ENCODE measurements at regions of chr17 and their contacts with region 1.

Region 1: GRCh38 chr17:78421484-78422266 is 43.2 kb downstream of the PGS1 start:
- DNase-seq: peak; percentile 75 to 85
- ATAC-seq: peak; percentile 79 to 90 (median 86)
- H3K4me3 ChIP-seq: no peak overlapping the region
- H3K27ac ChIP-seq: peak overlapping the region; percentile 7
- H3K4me1 ChIP-seq: peaks cover 16% of the 10 kb centered on the region
- H3K27me3 ChIP-seq: no peaks in the 10 kb centered on the region
- CTCF ChIP-seq: peak; percentile 100

Region 2: DNA sequence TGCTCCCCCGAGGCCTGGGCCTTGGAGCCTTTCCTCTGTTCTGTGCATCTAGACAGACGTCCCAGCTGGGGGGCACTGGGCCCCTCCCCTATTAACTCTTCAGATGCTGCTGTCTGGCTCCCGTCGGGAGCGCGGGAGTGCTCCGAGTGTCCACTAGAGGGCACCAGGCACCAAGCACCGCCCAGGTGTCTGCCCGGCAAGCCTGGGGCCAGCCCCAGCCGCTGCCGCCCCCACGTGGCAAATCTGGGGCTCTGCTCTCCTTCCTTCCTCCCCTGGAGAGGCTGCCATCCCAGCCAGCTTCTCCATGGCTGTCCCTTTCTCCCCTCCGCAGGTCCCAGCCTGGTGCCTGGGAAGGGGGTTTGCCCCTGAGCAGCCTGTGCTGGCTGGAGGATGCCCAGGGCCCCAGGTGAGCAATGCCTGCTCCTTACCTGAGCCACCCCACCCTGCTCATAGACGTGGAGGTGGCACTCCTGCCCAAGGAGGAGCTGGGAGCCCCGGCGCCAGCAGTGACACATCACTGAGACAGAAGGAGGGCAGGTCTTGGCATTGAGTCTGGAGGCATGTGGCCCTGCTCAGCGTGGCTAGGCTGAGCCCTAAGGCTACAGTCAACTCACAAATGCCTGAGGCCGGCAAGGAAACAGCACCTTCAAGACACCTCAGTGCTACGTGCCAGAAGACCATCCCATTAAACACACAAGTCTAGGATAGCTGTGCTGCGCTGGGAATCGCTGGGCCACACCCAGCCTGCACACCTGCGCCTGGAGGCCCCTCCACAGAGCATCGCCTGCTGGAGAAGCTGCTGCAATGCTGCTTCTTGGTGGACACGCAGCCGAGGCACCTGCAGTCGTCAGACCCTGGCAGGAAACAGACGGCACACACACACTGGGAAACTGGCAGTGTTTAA is 170.5 kb before region 1 on chr17:
- intact Hi-C with region 1: loop called in 1 of 2 experiments (anchors 1 kb)
- DNase-seq: peak; percentile 87 to 93
- ATAC-seq: peak; percentile 83 to 88 (median 86)
- H3K4me3 ChIP-seq: peak overlapping the region; percentile 4
- H3K27ac ChIP-seq: no peak overlapping the region
- H3K4me1 ChIP-seq: peaks cover 13% of the 10 kb centered on the region
- H3K27me3 ChIP-seq: no peaks in the 10 kb centered on the region
- CTCF ChIP-seq: peak; percentile 100

Region 3: GRCh38 chr17:78289802-78290363 is 131.8 kb before region 1 on chr17:
- intact Hi-C with region 1: loop called (anchors 2 to 5 kb)
- DNase-seq: peak; percentile 73 to 85
- ATAC-seq: peak; percentile 88 to 95 (median 90)
- H3K4me3 ChIP-seq: no peak overlapping the region
- H3K27ac ChIP-seq: no peak overlapping the region
- H3K4me1 ChIP-seq: peaks cover 9% of the 10 kb centered on the region
- H3K27me3 ChIP-seq: no peaks in the 10 kb centered on the region
- CTCF ChIP-seq: peak; percentile 64

Region 4: DNA sequence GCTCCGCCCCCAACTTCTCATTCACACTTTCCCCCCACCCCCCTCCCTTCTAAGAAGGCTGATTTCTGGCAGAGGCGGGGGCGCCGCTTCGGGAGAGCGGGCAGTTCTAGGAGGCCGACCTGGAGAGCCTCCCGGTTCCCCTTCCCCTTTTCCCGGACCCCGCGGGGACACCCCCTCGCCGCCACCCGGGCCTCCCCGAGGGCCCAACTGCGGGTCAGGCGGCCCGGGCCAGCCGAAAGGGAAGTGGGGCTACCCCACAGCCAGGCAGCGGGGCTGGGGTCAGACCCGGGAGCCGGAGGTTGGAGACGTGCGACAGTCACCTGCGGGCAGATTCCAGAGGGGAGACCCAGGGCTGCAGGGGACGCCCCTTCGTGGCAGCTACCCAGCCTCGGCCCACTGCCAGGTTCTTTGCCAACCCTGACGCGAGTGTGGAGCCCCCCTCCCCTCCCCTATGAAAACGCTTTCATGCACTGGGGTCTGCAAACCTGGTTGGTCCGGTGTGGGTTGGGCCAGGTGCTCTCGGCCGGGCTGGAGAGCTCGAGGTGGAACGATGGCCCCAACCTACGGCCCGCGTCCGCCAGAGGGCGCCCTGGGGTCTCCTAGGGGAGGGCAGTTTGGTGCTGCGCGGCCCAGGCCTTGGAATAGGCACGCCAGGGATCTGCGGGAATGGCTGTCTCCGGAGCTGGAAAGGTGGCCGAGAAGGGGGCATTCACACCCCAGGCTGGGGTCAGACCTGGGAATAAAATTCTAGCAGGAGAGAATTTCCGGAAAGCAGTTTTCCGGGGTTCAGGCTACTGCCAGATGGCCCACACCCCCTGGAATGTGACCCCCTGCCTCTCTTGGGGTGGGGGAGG is 61.1 kb before region 1 on chr17:
- intact Hi-C with region 1: loop called (anchors 1 to 2 kb)
- DNase-seq: peak; percentile 95 to 97
- ATAC-seq: peak; percentile 65 to 84 (median 78)
- H3K4me3 ChIP-seq: peak overlapping the region; percentile 96
- H3K27ac ChIP-seq: peak overlapping the region; percentile 82
- H3K4me1 ChIP-seq: peaks cover 18% of the 10 kb centered on the region
- H3K27me3 ChIP-seq: no peaks in the 10 kb centered on the region
- CTCF ChIP-seq: peak; percentile 91

Region 5: GRCh38 chr17:78474614-78475146 is 53.0 kb after region 1 on chr17:
- intact Hi-C with region 1: no loop called
- DNase-seq: no peak
- ATAC-seq: no peak
- H3K4me3 ChIP-seq: no peak overlapping the region
- H3K27ac ChIP-seq: no peak overlapping the region
- H3K4me1 ChIP-seq: no peaks in the 10 kb centered on the region
- H3K27me3 ChIP-seq: peaks cover 0 to 24% (median 3%) of the 10 kb centered on the region in 3 donors
- CTCF ChIP-seq: no peak